ENCODE measurements at regions of chr19 and their contacts with region 1.

Region 1: DNA sequence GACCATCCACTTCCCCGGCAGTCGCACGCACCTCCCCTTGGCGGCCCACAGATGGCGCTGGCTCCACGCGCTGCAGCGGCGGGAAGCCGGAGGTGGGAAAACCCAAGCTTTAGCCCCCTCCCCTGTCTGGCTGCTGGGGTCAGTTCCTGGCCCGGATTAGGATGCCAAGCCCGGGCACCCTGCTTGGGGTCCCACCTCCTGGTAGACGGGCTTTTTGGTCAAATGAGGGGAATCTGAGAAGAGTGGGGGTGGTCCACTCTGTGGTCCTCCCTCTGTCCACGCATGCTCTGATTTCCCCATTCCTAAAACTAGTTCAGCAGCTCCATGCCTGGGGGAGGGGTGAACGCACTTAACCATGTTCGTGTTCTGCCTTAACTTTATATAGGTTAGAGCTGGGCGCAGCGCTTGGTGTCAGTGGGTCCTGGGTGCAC is 8.1 kb upstream of the ADGRE2 start:
- DNase-seq: peak in 1 of 10 donors; percentile 52
- H3K4me3 ChIP-seq: peak overlapping the region in 4 of 59 donors; percentile 13 to 28 (median 24)
- H3K27ac ChIP-seq: peak overlapping the region in 2 of 59 donors; percentile 38 to 43
- H3K27me3 ChIP-seq: peaks cover 0 to 13% (median 5%) of the 10 kb centered on the region in 45 donors
- CTCF ChIP-seq: peak; percentile 31 to 82 (median 70)

Region 2: GRCh38 chr19:14835041-14835453 is 48.6 kb after region 1 on chr19 and contains the starts of genes OR7A5 and OR7C1:
- intact Hi-C with region 1: no loop called
- DNase-seq: no peak
- H3K4me3 ChIP-seq: peak within 1 kb of the TSS in 40 of 59 donors; percentile 2 to 60 (median 29)
- H3K27ac ChIP-seq: peak within 1 kb of the TSS in 48 of 59 donors; percentile 1 to 95 (median 74)
- H3K27me3 ChIP-seq: peaks cover 0 to 4% (median 0%) of the 10 kb centered on the region in 45 donors
- CTCF ChIP-seq: no peak
- total RNA-seq, gene OR7A5: 0.09 to 15.9 (median 1.4) TPM in 116 of 120 experiments, not detected in the others
- total RNA-seq, gene OR7C1: 0.03 to 5.0 (median 0.61) TPM in 117 of 120 experiments, not detected in the others

Region 3: DNA sequence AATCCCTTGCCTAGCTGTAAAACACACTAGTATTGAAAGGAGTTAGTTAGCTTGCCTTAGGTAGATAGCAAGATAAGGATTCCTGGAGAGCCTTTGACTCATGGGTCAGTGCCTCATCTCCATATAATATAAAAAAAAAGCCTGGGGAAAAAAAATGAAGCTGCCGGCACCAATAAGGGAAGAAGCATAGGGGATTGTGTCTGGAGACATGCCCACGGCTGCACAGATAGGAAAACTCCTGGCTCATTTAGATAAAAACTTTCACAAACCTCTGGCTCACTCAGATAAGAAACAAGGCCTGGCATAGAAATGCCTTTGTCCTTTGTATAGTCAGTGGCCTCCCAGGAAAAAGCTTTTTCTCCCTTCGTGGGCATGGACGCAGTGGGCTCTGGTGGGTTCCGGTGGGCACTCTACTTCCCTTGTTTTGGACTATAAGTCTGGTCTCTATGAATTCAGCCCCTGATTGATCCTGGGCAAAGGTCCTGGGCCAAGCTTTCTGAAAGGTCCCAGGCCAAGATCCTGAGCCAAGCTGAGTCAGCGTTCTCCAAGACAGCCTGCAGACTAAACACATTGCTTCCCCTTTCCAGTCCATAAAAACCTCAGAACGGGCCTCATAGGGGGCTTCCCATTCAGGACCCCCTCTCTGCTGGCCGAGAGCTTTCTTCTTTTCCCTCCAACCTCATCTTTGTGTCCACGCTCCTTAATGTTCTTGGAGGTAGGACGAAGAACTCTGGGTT is 104.4 kb after region 1 on chr19:
- intact Hi-C with region 1: loop called (anchors 5 to 10 kb)
- DNase-seq: no peak
- H3K4me3 ChIP-seq: no peak overlapping the region
- H3K27ac ChIP-seq: peak overlapping the region in 1 of 59 donors; percentile 17
- H3K27me3 ChIP-seq: peaks cover 0 to 41% (median 4%) of the 10 kb centered on the region in 45 donors
- CTCF ChIP-seq: no peak

Measured in dorsolateral prefrontal cortex (tissue), 120 donors.